PC-3 (cell line): ENCODE measurements at regions of chr4 and their contacts with region 1.

Region 1: GRCh38 chr4:42568610-42569207 is 88.2 kb downstream of the ATP8A1 start:
- DNase-seq: peak; percentile 77
- ATAC-seq: peak; percentile 94
- H3K4me3 ChIP-seq: no peak overlapping the region
- H3K27ac ChIP-seq: no peak overlapping the region
- H3K4me1 ChIP-seq: no peaks in the 10 kb centered on the region
- H3K27me3 ChIP-seq: no peaks in the 10 kb centered on the region
- CTCF ChIP-seq: peak; percentile 72

Region 2: DNA sequence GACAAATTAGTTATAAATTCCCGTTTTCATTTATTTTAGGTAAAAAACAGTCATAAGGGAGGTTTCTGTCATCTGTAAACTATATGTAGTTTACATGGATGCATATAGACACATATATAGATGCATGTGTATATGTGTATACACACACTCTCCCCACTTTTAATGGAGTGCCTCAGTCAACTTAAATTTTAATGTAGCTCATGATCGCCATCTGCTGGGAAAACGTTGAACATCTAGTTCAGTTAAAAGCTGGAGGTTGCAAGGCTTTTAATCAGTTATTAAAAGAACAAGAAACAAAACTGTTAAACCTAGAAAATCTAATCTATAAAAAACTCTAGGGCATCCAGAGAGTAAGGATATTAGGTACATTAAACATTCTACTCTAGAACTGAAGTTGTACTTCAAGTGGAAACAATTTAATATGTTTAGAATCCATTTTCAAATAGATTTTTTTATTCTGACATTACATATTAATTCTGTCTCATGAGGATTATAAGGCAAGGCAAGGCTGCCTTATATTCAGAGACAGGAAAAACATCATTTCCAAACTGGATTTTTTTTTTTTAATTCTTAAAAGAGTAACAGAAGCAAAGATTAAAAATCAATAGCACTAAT is 48.8 kb before region 1 on chr4:
- CTCF ChIA-PET with region 1: no interaction called
- POLR2A ChIA-PET with region 1: no interaction called
- intact Hi-C with region 1: no loop called
- DNase-seq: peak; percentile 81
- ATAC-seq: peak; percentile 64
- H3K4me3 ChIP-seq: no peak overlapping the region
- H3K27ac ChIP-seq: no peak overlapping the region
- H3K4me1 ChIP-seq: no peaks in the 10 kb centered on the region
- H3K27me3 ChIP-seq: no peaks in the 10 kb centered on the region
- CTCF ChIP-seq: peak; percentile 76

Region 3: GRCh38 chr4:42656944-42657792 is 88.5 kb after region 1 on chr4 and contains the start of gene ATP8A1:
- CTCF ChIA-PET with region 1: interaction called, 3 read pairs
- POLR2A ChIA-PET with region 1: no interaction called
- intact Hi-C with region 1: loop called (anchors 2 kb)
- DNase-seq: peak; percentile 84
- ATAC-seq: peak; percentile 63
- H3K4me3 ChIP-seq: peak within 1 kb of the TSS; percentile 84
- H3K27ac ChIP-seq: peak within 1 kb of the TSS; percentile 82
- H3K4me1 ChIP-seq: peaks cover 39% of the 10 kb centered on the region
- H3K27me3 ChIP-seq: no peaks in the 10 kb centered on the region
- CTCF ChIP-seq: no peak
- total RNA-seq, gene ATP8A1: 3.9 and 5.3 TPM in 2 replicates

Region 4: DNA sequence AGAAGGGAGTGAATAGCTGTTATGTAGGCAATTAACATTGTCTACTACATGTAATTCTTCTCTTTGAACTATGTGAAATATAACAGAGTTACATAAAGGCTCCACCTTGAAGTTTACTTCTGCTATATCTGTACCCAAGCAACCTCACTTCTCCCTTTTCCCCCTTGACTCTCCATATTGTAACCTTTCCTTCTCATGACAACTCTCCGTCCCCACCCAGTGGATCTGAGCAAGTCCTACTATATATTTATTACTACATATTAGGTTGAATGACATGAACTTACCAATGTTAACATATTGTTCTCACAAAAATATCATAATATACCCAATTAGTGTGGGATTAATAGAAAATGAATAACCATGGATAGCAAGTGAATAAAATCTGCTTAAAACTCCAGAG is 181.4 kb after region 1 on chr4:
- CTCF ChIA-PET with region 1: interaction called, 8 read pairs
- POLR2A ChIA-PET with region 1: no interaction called
- intact Hi-C with region 1: loop called (anchors 2 kb)
- DNase-seq: peak; percentile 31
- ATAC-seq: peak; percentile 37
- H3K4me3 ChIP-seq: no peak overlapping the region
- H3K27ac ChIP-seq: no peak overlapping the region
- H3K4me1 ChIP-seq: no peaks in the 10 kb centered on the region
- H3K27me3 ChIP-seq: no peaks in the 10 kb centered on the region
- CTCF ChIP-seq: peak; percentile 36; the same call in 1 of the 2 replicates

Region 5: DNA sequence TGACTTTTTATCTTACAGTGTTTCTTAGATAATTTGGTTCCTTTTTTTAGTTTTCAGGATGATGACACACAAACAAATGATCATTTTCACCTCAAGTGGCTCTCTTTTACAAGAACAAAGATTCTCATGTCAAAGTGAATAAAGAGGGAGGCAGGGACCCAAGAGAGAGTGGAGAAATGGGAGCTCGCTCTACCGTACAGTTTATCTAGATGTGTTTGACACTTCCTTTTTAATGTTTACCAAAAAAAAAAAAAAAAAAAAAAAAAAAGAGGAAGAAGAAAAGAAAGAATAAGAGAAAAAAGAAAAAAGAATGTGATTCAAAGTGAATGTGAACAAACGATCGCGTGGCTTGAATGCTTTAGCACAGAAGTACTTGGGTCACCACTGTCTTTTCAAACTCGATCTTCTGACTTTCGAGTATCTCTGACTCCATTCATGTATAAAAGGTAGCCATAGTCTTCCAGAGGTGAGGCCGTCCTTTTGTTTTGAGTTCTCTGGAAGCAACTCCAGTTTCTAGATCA is 248.2 kb after region 1 on chr4:
- CTCF ChIA-PET with region 1: interaction called, 7 read pairs
- POLR2A ChIA-PET with region 1: no interaction called
- intact Hi-C with region 1: loop called (anchors 1 kb)
- DNase-seq: no peak
- ATAC-seq: no peak
- H3K4me3 ChIP-seq: no peak overlapping the region
- H3K27ac ChIP-seq: no peak overlapping the region
- H3K4me1 ChIP-seq: no peaks in the 10 kb centered on the region
- H3K27me3 ChIP-seq: 0 out of 2 replicates have a peak, but pooled peaks cover 7% of the 10 kb centered on the region
- CTCF ChIP-seq: no peak

Region 6: GRCh38 chr4:42865572-42866189 is 297.0 kb after region 1 on chr4:
- CTCF ChIA-PET with region 1: no interaction called
- POLR2A ChIA-PET with region 1: no interaction called
- intact Hi-C with region 1: loop called (anchors 1 kb)
- DNase-seq: peak; percentile 75
- ATAC-seq: peak; percentile 37; the same call in 1 of the 2 replicates
- H3K4me3 ChIP-seq: no peak overlapping the region
- H3K27ac ChIP-seq: no peak overlapping the region
- H3K4me1 ChIP-seq: no peaks in the 10 kb centered on the region
- H3K27me3 ChIP-seq: peaks cover 7% of the 10 kb centered on the region; the same call in 1 of the 2 replicates
- CTCF ChIP-seq: peak; percentile 68

Region 7: DNA sequence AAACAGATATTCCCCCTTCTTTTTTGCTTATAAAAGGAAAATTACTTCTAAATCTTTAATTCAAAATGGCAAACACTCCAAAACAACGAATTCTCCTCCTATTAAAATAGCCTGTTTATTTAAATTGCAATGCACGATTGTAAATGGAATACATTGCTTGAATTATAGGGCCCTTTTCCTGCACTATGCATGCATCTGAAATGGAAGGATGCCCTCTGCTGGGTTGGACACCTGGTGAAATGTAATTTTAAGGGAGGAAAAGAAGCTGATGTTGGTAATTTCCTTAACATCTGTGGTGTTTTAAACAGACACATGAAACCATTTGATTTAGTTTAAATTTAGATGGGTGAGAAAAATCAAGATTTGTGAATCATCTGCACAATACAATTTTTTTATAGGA is 396.6 kb after region 1 on chr4:
- CTCF ChIA-PET with region 1: interaction called, 3 read pairs
- POLR2A ChIA-PET with region 1: no interaction called
- intact Hi-C with region 1: loop called (anchors 2 kb)
- DNase-seq: peak; percentile 48
- ATAC-seq: peak; percentile 60
- H3K4me3 ChIP-seq: no peak overlapping the region
- H3K27ac ChIP-seq: no peak overlapping the region
- H3K4me1 ChIP-seq: no peaks in the 10 kb centered on the region
- H3K27me3 ChIP-seq: no peaks in the 10 kb centered on the region
- CTCF ChIP-seq: peak; percentile 65